ENCODE measurements at regions of chr13 and their contacts with region 1.

Region 1: GRCh38 chr13:38530492-38530891 is 156.4 kb upstream of the FREM2 start:
- DNase-seq: no peak
- H3K4me3 ChIP-seq: no peak overlapping the region
- H3K4me3 Mint-ChIP-seq: no peak overlapping the region
- H3K27ac Mint-ChIP-seq: no peak overlapping the region
- H3K4me1 ChIP-seq: no peaks in the 10 kb centered on the region
- H3K4me1 Mint-ChIP-seq: peaks cover 10% of the 10 kb centered on the region
- H3K27me3 ChIP-seq: no peaks in the 10 kb centered on the region; the same call in 1 of the 2 replicates
- H3K27me3 Mint-ChIP-seq: no peaks in the 10 kb centered on the region
- CTCF ChIP-seq: peak; percentile 32 to 52

Region 2: DNA sequence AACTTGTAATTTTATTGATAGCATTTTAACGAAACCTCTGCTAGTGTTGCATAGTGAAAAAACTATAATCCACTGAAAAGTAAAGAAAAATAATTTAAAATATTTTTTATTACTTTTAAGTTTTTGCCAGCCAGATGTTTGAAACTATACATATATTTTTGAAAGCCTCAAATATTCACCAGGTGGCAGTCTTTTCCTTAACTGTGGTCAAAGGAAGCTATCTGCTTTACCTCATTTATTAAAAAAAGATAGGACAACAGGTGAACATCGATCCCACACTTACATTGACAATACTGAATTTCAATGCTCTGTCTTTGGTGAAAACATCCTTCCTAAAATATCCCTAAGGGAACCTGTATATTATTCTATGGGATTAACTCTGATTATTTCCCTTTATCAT is 761.4 kb before region 1 on chr13:
- CTCF ChIA-PET with region 1: no interaction called
- POLR2A ChIA-PET with region 1: no interaction called
- intact Hi-C with region 1: loop called (anchors 1 kb)
- DNase-seq: no peak
- H3K4me3 ChIP-seq: no peak overlapping the region
- H3K4me3 Mint-ChIP-seq: no peak overlapping the region
- H3K27ac Mint-ChIP-seq: no peak overlapping the region
- H3K4me1 ChIP-seq: no peaks in the 10 kb centered on the region
- H3K4me1 Mint-ChIP-seq: no peaks in the 10 kb centered on the region
- H3K27me3 ChIP-seq: no peaks in the 10 kb centered on the region
- H3K27me3 Mint-ChIP-seq: peaks cover 3% of the 10 kb centered on the region
- CTCF ChIP-seq: peak in 1 of 2 experiments; percentile 13

Region 3: GRCh38 chr13:38045307-38046048 is 485.0 kb before region 1 on chr13:
- CTCF ChIA-PET with region 1: no interaction called
- POLR2A ChIA-PET with region 1: no interaction called
- intact Hi-C with region 1: loop called (anchors 5 kb)
- DNase-seq: peak in 1 of 2 experiments; percentile 47
- H3K4me3 ChIP-seq: no peak overlapping the region
- H3K4me3 Mint-ChIP-seq: no peak overlapping the region
- H3K27ac Mint-ChIP-seq: no peak overlapping the region
- H3K4me1 ChIP-seq: no peaks in the 10 kb centered on the region
- H3K4me1 Mint-ChIP-seq: no peaks in the 10 kb centered on the region
- H3K27me3 ChIP-seq: no peaks in the 10 kb centered on the region
- H3K27me3 Mint-ChIP-seq: no peaks in the 10 kb centered on the region
- CTCF ChIP-seq: peak; percentile 56 to 85

Region 4: DNA sequence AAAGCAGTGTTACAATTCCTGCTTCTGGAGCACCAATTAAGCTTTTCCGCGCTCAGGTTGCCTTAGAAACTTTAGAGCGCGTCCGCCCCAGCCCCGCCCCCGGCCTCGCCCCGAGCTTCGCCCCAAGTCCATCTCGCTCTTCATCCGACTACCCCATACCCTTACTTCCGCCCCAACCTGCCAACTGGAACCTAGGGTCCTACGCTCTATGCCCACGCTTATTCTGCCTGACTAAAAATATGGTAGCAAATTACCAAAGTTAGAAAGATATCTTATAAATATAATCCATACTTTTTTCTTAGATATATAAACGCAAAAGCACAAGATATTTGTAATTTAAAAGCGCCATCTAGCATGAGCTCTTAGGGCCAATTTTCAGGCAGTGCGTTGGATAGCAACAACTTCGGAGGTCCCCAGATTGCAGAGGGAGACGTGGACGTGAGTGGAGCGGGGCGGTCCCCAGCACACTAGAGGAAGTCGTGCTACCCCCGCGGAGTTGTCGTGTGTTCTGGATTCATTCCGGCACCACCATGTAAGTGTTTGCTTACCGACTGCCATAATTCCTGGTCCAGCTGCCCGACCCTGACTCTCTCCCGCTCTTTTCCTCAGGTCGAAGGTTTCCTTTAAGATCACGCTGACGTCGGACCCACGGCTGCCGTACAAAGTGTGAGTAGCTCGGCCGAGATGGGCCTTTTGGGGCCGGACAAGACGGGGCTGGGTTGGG is 180.9 kb before region 1 on chr13 and contains the start of gene UFM1:
- CTCF ChIA-PET with region 1: no interaction called
- POLR2A ChIA-PET with region 1: no interaction called
- intact Hi-C with region 1: loop called (anchors 5 kb)
- DNase-seq: peak; percentile 91 to 95
- H3K4me3 ChIP-seq: peak within 1 kb of the TSS; percentile 88
- H3K4me3 Mint-ChIP-seq: peak within 1 kb of the TSS; percentile 89
- H3K27ac Mint-ChIP-seq: peak within 1 kb of the TSS; percentile 93
- H3K4me1 ChIP-seq: peaks cover 22% of the 10 kb centered on the region
- H3K4me1 Mint-ChIP-seq: peaks cover 34% of the 10 kb centered on the region
- H3K27me3 ChIP-seq: no peaks in the 10 kb centered on the region
- H3K27me3 Mint-ChIP-seq: no peaks in the 10 kb centered on the region
- CTCF ChIP-seq: no peak
- total RNA-seq, gene UFM1: 98.3 and 106 TPM in 2 replicates

Region 5: GRCh38 chr13:38914070-38914469 is 383.6 kb after region 1 on chr13:
- CTCF ChIA-PET with region 1: no interaction called
- POLR2A ChIA-PET with region 1: no interaction called
- intact Hi-C with region 1: loop called (anchors 2 kb)
- DNase-seq: no peak
- H3K4me3 ChIP-seq: no peak overlapping the region
- H3K4me3 Mint-ChIP-seq: no peak overlapping the region
- H3K27ac Mint-ChIP-seq: no peak overlapping the region
- H3K4me1 ChIP-seq: peaks cover 5% of the 10 kb centered on the region
- H3K4me1 Mint-ChIP-seq: peaks cover 6% of the 10 kb centered on the region
- H3K27me3 ChIP-seq: no peaks in the 10 kb centered on the region
- H3K27me3 Mint-ChIP-seq: peaks cover 4% of the 10 kb centered on the region
- CTCF ChIP-seq: no peak